Colonic mucosa (tissue), 4 donors: ENCODE measurements at regions of chr11 and their contacts with region 1.

Region 1: GRCh38 chr11:120301982-120302843 is 22.9 kb upstream of the TLCD5 start:
- DNase-seq: peak; percentile 77
- H3K4me3 ChIP-seq: no peak overlapping the region
- H3K27ac ChIP-seq: peak overlapping the region; percentile 47
- H3K4me1 ChIP-seq: no peaks in the 10 kb centered on the region
- H3K27me3 ChIP-seq: no peaks in the 10 kb centered on the region
- CTCF ChIP-seq: no peak

Region 2: DNA sequence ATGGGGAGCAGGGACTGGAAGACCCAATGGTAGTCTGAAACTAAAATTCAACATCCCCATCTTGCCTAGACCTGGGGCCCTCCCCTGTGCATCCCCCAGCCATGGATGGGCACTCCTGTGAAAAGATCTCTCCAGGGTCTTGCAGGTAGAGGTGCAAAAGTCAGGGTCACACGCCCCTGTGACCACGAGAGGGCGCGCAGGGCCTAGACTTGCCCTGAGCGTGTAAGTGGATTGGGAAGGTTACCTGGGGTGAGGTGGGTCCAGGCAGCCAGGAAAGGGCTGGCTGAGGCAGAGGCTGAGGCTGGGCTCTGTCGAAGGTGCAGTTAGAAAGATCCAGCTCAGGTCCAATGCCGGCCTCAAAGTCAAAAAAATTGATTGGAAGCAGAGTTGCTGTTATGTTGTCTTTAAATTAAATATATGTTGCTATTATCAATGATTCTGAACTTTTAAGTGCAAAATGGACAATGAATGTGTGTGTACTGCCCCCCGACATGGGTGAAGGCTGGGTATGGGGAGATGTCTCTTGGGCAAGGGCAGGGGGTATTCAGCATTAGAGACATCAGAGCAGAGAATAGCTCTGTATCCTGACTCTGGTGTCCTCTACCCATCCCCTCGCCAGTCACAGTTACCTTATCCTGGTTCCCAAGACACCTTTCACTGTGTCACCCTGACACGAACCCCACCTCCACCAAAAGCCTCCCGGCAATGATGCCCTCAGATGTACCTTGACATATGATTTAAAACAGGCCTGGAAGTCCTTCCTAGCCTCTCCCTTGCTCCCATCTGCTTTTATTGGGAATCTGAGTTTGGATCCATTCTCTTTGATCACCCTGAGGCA is 67.0 kb before region 1 on chr11:
- intact Hi-C with region 1: loop called (anchors 2 kb)
- DNase-seq: peak; percentile 72
- H3K4me3 ChIP-seq: no peak overlapping the region
- H3K27ac ChIP-seq: no peak overlapping the region
- H3K4me1 ChIP-seq: peaks cover 3% of the 10 kb centered on the region
- H3K27me3 ChIP-seq: peaks cover 8% of the 10 kb centered on the region
- CTCF ChIP-seq: peak; percentile 72